ENCODE measurements at regions of chr10 and their contacts with region 1.

Region 1: DNA sequence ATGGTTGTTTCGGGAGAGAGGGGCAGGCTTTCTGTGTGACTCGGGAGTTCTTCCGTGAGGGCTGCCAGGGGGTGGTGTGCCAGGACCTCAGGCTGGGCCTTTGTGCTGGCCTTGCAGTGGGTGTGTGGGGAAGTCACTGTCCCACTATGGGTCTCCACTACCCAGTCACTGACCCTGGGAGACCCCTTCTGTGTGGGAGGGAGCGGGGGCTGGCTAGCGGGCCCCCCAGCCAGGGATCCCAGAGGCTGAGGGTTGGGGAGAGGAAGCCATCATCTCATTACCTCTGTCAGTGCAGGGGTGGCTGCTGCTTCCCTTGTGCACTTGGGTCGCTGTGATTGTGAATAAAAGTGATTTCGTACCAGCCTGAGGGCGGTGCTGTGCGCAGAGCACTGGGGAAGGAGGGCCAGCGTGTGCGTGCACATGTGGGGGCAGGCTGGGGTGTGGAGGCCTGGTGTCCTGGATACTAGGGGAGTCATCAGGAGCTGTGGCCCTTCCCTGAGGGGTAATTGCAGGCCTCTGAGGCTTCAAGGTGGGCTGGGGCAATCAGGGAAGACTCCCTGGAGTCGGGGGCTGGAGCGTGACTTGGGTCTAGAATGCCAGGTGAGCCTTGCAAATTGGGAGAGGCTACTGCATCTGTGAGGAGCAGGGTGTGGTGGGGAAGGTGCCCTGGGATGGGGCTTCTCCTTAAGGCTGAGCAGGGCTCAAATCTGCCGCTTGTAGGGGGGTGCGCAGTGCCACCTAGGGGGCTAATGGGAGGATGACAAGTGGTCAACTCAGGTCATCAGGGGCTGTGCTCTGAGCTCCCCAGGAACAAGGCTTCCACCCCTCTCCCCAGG is 98.9 kb downstream of the NEURL1 start:
- DNase-seq: peak; percentile 64
- H3K4me3 Mint-ChIP-seq: no peak overlapping the region
- H3K27ac Mint-ChIP-seq: no peak overlapping the region
- H3K4me1 Mint-ChIP-seq: no peaks in the 10 kb centered on the region
- H3K27me3 Mint-ChIP-seq: no peaks in the 10 kb centered on the region

Region 2: GRCh38 chr10:103396064-103396788 is 196.2 kb before region 1 on chr10 and contains the starts of genes ATP5MK and PDCD11:
- CTCF ChIA-PET with region 1: no interaction called
- intact Hi-C with region 1: no loop called
- DNase-seq: peak; percentile 99
- H3K4me3 Mint-ChIP-seq: peak within 1 kb of the TSS; percentile 97
- H3K27ac Mint-ChIP-seq: peak within 1 kb of the TSS; percentile 85
- H3K4me1 Mint-ChIP-seq: peaks cover 69% of the 10 kb centered on the region
- H3K27me3 Mint-ChIP-seq: no peaks in the 10 kb centered on the region
- total RNA-seq, gene ATP5MK: 422 to 423 TPM
- total RNA-seq, gene PDCD11: 50.1 TPM

Region 3: DNA sequence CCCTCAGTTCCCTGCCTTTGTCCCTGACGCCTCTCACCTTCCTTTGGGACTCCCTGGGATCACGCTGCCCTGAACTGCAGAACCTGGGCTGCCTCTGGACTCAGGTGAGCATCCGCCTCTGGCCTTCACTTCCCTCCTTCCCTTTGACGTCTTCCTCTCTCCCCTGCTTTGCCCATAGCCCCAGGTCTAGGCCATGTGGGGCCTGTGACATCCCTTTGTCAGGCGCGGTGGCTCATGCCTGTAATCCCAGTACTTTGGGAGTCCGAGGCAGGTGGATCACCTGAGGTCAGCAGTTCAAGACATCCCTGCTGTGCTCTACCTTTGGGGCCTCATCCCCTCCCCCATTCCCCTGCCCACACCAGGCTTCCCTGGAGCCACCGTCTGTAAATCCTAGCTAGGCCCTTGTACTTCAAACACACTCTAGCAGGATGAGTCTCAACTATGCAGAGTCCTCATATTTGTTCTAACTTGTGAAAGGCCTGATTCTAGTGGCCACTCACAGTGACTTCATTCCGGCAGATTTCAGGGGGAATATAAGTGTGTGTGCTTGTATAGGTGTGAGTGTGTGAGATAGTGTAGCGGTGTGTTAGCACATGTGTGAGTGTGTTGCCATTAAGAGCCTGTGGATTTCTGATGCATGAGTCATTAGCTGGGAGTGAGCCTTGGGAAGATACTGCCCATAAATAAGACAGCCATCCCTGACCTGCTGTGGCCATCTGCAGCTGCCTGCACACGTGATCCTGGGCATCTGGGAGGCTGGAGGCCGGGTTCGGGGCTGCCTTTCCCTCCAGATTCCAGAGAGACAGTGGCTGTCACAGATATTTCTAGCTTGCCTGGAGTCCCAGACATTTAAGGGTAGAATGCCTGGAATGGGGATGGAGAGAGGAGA is 100.7 kb before region 1 on chr10:
- CTCF ChIA-PET with region 1: interaction called, 7 read pairs
- intact Hi-C with region 1: loop called (anchors 5 kb)
- DNase-seq: no peak
- H3K4me3 Mint-ChIP-seq: no peak overlapping the region
- H3K27ac Mint-ChIP-seq: no peak overlapping the region
- H3K4me1 Mint-ChIP-seq: peaks cover 16% of the 10 kb centered on the region
- H3K27me3 Mint-ChIP-seq: peaks cover 35% of the 10 kb centered on the region

Region 4: DNA sequence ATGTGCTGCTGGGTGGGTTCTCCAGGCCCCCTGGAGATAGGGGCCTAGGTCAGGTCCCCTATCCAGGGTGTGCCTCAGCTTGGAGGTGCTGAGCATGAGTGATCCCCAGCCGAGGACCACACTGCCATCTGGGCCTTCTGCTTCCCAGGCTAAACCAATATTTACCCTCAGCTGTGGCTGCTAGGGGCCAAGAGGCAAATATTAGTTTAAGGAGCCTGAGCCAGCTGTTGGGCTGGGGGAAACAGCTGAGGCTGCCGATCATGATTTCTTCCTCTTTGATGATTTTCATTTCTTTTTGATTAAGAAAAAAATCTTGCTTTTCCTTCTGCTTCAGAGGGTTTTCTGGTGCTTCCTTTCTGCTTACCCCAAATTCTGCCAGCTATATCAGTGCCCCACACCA is 15.5 kb before region 1 on chr10:
- CTCF ChIA-PET with region 1: no interaction called
- intact Hi-C with region 1: no loop called
- DNase-seq: no peak
- H3K4me3 Mint-ChIP-seq: no peak overlapping the region
- H3K27ac Mint-ChIP-seq: no peak overlapping the region
- H3K4me1 Mint-ChIP-seq: no peaks in the 10 kb centered on the region
- H3K27me3 Mint-ChIP-seq: no peaks in the 10 kb centered on the region

Region 5: DNA sequence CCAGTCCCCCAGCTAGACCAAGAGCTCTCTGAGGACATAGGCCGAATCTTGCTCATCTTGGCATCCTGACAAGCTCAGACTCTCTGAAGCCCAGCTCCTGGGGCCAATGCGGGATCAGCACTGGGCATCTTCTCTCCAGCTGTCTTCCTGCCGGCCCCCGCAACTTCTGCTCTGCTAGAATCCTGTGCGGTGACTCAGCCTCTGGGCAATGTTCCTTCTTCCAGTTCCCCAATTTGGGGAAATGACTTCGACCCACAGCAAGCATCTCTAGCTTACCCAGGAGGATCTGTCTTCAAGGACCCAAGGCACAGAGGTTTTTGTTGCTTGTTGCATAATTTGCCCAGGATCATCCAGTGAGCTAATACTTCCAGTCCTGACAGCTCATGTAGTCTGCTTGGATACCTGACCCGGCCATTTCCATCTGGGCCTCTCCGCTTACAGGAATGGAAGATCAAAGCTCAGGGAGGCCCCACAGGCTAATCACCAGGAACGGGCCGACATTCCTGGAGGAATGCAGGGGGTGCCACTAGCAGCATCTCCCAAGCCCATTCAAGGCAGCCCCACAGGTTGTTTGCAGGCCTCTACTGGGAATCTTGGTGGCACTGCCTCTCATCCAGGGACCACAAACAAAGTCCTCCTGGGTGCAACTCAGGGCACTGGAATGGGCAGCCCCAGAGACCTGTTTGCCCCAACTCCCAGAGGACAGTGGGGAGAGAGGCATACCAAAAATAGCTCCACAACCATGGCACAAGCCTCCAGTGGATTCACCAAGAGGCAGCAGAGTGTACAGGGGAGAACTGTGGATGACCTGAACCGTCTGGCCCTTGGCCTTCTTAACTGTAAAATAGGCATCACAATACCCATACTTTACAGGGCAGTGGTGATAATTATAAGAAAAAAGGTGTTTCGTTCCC is 53.0 kb after region 1 on chr10:
- CTCF ChIA-PET with region 1: no interaction called
- intact Hi-C with region 1: no loop called
- DNase-seq: no peak
- H3K4me3 Mint-ChIP-seq: no peak overlapping the region
- H3K27ac Mint-ChIP-seq: no peak overlapping the region
- H3K4me1 Mint-ChIP-seq: no peaks in the 10 kb centered on the region
- H3K27me3 Mint-ChIP-seq: no peaks in the 10 kb centered on the region

Region 6: GRCh38 chr10:103895411-103896186 is 303.2 kb after region 1 on chr10:
- CTCF ChIA-PET with region 1: no interaction called
- intact Hi-C with region 1: no loop called
- DNase-seq: peak; percentile 32
- H3K4me3 Mint-ChIP-seq: no peak overlapping the region
- H3K27ac Mint-ChIP-seq: peak overlapping the region; percentile 84
- H3K4me1 Mint-ChIP-seq: peaks cover 37% of the 10 kb centered on the region
- H3K27me3 Mint-ChIP-seq: no peaks in the 10 kb centered on the region

Measured in activated naive CD4-positive, alpha-beta T cell treated with anti-CD3 and anti-CD28 coated beads for 36 hours (primary cell).